GM13977 (cell line): ENCODE measurements at regions of chr11 and their contacts with region 1.

Region 1: GRCh38 chr11:111601979-111602864 is at the start of gene SIK2:
- DNase-seq: peak; percentile 96
- CTCF ChIP-seq: peak; percentile 92

Region 2: DNA sequence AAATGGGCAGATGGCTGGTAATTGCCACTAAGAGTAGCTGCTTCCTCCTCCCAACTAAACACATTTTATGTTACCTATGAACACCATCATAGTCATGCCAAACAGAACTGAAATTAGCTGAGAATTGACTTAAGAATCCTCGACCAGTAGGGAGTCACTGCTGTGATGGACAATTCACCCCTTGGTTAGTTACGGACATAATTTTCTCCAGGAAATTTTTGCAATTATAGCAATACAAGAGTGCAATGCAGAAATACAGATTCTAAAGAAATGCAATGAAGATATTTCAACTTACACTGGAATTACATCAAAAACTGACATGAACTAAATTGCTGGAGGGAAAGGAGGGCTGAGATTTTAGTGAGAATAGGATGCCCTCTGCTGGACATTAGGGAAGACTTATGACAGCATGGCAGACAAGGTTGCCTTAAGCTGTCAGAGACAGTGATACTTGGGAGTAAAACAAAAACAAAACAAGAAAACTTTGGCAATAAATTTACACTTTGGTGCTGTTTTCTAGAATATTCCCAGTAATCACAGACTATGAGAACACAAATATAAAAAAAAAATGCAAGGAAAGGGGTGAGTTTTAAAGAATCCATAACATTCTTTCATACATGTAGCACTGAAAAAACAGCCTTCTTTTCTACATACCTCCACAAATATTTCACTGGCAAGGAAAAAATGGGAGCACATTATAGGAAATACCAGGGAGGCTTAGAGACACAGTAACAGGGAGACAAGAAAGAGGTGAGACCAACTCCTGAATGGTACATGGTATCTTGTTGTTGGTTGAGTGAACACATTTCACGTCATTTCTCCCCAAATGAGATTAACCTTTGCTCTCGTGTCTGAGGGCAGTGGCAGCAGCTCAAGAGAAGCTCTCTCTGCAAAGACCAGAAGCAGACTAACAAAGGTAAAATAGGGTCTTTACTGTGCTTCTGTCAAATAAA is 175.1 kb after region 1 on chr11:
- in situ Hi-C with region 1: loop called (anchors 10 kb)
- DNase-seq: peak; percentile 66
- CTCF ChIP-seq: peak; percentile 71

Region 3: DNA sequence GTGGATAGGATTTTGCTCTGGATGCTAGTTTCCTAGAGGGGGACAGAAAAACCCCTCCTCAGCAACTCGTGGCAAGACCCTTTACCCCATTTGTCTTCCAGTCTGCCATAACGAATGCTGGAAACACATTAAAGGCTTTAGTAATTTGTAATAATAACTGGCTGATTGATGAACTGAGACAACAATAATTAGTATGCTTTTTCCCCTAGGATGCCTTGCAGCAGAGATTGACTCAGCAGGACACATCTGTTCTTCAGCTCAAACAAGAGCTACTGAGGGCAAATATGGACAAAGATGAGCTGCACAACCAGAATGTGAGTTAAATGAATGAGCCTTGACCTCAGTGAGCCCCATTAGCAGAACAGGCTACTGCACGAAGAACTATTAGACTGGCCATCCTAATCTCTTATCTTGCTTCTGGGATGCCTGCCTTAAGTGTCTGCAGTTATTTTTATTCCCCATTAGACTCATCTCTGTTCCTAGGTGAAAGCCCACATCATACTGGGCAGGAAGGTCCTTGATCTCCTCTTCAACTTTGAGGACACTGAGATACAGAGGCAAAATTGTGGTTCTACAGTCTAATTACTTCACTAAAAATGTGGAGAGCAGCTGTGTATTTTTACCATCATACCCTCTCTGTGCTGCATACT is 390.1 kb after region 1 on chr11:
- in situ Hi-C with region 1: no loop called
- DNase-seq: no peak
- CTCF ChIP-seq: no peak

Region 4: DNA sequence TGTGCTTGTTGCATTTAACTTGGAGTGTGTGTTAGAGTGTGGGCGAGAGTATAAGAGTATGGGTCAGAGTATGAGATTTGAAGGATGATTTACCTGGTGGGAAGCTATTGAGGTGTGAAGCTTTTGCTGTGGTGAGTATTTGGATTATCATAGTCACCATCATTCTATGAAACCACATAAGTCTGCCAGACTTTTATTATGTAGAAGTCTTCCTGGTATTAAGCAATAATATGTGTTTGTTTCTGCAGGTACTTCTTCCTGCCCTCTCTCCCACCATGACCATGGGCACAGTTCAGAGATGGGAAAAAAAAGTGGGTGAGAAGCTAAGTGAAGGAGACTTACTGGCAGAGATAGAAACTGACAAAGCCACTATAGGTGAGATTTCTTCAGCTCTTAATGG is 430.9 kb after region 1 on chr11:
- in situ Hi-C with region 1: no loop called
- DNase-seq: no peak
- CTCF ChIP-seq: no peak

Region 5: GRCh38 chr11:112086422-112087191 is 484.4 kb after region 1 on chr11 and contains the starts of genes SDHD and TIMM8B:
- in situ Hi-C with region 1: no loop called
- DNase-seq: peak; percentile 90
- CTCF ChIP-seq: no peak